ENCODE measurements at regions of chr22 and their contacts with region 1.

Region 1: GRCh38 chr22:20205964-20206708 is 55.3 kb upstream of the CCDC188 start:
- DNase-seq: peak; percentile 35 to 75 (median 63)
- ATAC-seq: peak; percentile 91
- H3K4me3 ChIP-seq: peak overlapping the region; percentile 96
- H3K4me3 Mint-ChIP-seq: peak overlapping the region; percentile 85 to 98 (median 94)
- H3K27ac ChIP-seq: peak overlapping the region; percentile 83
- H3K27ac Mint-ChIP-seq: peak overlapping the region; percentile 91 to 97 (median 94)
- H3K4me1 ChIP-seq: peaks cover 16 to 24% of the 10 kb centered on the region in 2 donors
- H3K4me1 Mint-ChIP-seq: peaks cover 12 to 36% (median 25%) of the 10 kb centered on the region in 7 donors
- H3K27me3 ChIP-seq: no peaks in the 10 kb centered on the region
- H3K27me3 Mint-ChIP-seq: no peaks in the 10 kb centered on the region

Region 2: GRCh38 chr22:19455585-19456370 is 750.4 kb before region 1 on chr22:
- CTCF ChIA-PET with region 1: no interaction called
- POLR2A ChIA-PET with region 1: no interaction called
- intact Hi-C with region 1: no loop called
- DNase-seq: no peak
- ATAC-seq: no peak
- H3K4me3 ChIP-seq: no peak overlapping the region
- H3K4me3 Mint-ChIP-seq: no peak overlapping the region
- H3K27ac ChIP-seq: no peak overlapping the region
- H3K27ac Mint-ChIP-seq: peak overlapping the region in 5 of 9 donors; percentile 30 to 76 (median 54)
- H3K4me1 ChIP-seq: no peaks in the 10 kb centered on the region
- H3K4me1 Mint-ChIP-seq: peaks cover 0 to 1% (median 0%) of the 10 kb centered on the region in 7 donors
- H3K27me3 ChIP-seq: no peaks in the 10 kb centered on the region
- H3K27me3 Mint-ChIP-seq: no peaks in the 10 kb centered on the region

Region 3: DNA sequence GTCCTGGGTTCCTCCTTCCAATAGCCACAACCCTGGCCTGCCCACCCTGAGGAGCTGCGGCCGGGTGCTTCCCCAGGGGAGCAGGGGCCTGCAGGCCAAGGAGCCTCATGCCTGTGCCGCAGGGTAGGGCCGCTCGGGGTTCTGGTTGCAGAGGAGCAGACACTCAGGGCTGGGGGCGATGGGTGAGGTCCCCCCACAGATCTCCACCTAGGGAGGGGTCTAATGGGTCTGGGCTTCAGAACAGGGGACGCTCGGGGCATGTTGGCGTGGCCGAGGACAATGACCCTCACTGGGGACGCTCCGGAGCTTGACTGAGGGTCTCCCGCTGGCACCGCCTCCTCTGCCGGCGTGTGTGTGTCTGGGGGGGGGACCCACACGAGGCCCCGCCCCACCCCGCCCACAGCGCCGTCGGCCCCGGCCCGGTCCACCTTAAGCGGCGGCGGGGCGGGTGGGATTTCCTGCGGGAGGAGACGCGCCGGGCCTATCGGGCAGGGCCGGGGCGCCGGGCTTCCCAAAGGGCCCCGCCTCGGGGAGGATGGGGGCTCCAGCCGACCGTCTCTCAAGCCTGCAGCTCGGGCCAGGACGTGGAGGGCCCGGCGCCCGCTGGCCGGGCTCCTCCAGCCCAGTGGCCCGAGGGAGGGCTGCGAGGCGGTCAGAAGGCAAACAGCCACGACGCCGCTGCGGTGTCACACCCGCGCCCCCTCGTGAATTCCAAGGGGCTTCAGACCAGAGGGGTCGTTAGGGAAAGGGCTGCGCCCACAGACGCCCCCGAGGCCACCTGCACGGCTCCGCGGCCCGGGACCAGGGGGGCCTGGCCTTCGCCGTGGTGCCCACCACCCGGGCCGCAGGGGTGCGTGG is 75.2 kb before region 1 on chr22:
- CTCF ChIA-PET with region 1: no interaction called
- POLR2A ChIA-PET with region 1: interaction called, 3 read pairs
- intact Hi-C with region 1: loop called in 1 of 2 experiments (anchors 1 kb)
- DNase-seq: peak; percentile 65 to 77 (median 72)
- ATAC-seq: peak; percentile 88
- H3K4me3 ChIP-seq: peak overlapping the region; percentile 73
- H3K4me3 Mint-ChIP-seq: peak overlapping the region in 8 of 10 donors; percentile 17 to 75 (median 69)
- H3K27ac ChIP-seq: peak overlapping the region; percentile 91
- H3K27ac Mint-ChIP-seq: peak overlapping the region in 6 of 9 donors; percentile 36 to 82 (median 68)
- H3K4me1 ChIP-seq: peaks cover 14 to 20% of the 10 kb centered on the region in 2 donors
- H3K4me1 Mint-ChIP-seq: peaks cover 0 to 33% (median 23%) of the 10 kb centered on the region in 7 donors
- H3K27me3 ChIP-seq: no peaks in the 10 kb centered on the region
- H3K27me3 Mint-ChIP-seq: no peaks in the 10 kb centered on the region

Region 4: DNA sequence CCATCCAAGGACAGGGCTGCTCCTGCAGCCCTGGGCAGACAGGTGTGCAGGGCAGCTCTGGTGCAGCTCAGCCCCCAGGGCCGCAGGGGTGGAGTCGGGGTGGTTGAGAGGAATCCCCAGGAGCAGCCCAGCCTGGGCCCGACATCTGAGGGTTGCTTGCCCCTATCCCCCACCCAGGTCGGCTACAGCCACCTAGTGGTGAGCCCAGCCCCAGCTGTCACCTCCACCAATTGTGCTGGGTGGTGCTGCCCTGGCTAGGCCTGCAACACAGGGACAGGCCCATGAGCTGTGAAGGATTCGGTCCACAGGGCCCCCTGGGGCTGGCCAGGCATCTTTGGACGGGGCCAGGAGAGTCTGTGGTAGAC is 32.4 kb after region 1 on chr22:
- CTCF ChIA-PET with region 1: no interaction called
- POLR2A ChIA-PET with region 1: interaction called, 30 read pairs
- intact Hi-C with region 1: loop called (anchors 1 kb)
- DNase-seq: peak in 7 of 9 donors; percentile 28 to 50 (median 38)
- ATAC-seq: peak; percentile 64
- H3K4me3 ChIP-seq: no peak overlapping the region
- H3K4me3 Mint-ChIP-seq: peak overlapping the region in 8 of 10 donors; percentile 29 to 54 (median 40)
- H3K27ac ChIP-seq: peak overlapping the region; percentile 49
- H3K27ac Mint-ChIP-seq: peak overlapping the region; percentile 36 to 87 (median 79)
- H3K4me1 ChIP-seq: peaks cover 31 to 59% of the 10 kb centered on the region in 2 donors
- H3K4me1 Mint-ChIP-seq: peaks cover 8 to 47% (median 14%) of the 10 kb centered on the region in 7 donors
- H3K27me3 ChIP-seq: no peaks in the 10 kb centered on the region
- H3K27me3 Mint-ChIP-seq: no peaks in the 10 kb centered on the region

Region 5: GRCh38 chr22:20243537-20244249 is 37.6 kb after region 1 on chr22:
- CTCF ChIA-PET with region 1: no interaction called
- POLR2A ChIA-PET with region 1: interaction called, 30 read pairs
- intact Hi-C with region 1: loop called (anchors 1 kb)
- DNase-seq: peak in 8 of 9 donors; percentile 44 to 67 (median 56)
- ATAC-seq: peak; percentile 64
- H3K4me3 ChIP-seq: peak overlapping the region; percentile 51
- H3K4me3 Mint-ChIP-seq: peak overlapping the region; percentile 71 to 88 (median 77)
- H3K27ac ChIP-seq: peak overlapping the region; percentile 78
- H3K27ac Mint-ChIP-seq: peak overlapping the region; percentile 88 to 98 (median 94)
- H3K4me1 ChIP-seq: peaks cover 50 to 74% of the 10 kb centered on the region in 2 donors
- H3K4me1 Mint-ChIP-seq: peaks cover 29 to 57% (median 35%) of the 10 kb centered on the region in 7 donors
- H3K27me3 ChIP-seq: no peaks in the 10 kb centered on the region
- H3K27me3 Mint-ChIP-seq: no peaks in the 10 kb centered on the region

Region 6: GRCh38 chr22:20268279-20269012 is 62.3 kb after region 1 on chr22 and contains the start of gene RTN4R:
- CTCF ChIA-PET with region 1: no interaction called
- POLR2A ChIA-PET with region 1: no interaction called
- intact Hi-C with region 1: loop called in 1 of 2 experiments (anchors 1 kb)
- DNase-seq: peak in 7 of 9 donors; percentile 41 to 73 (median 52)
- ATAC-seq: peak; percentile 84
- H3K4me3 ChIP-seq: no peak within 1 kb of the TSS
- H3K4me3 Mint-ChIP-seq: peak within 1 kb of the TSS; percentile 47 to 79 (median 74)
- H3K27ac ChIP-seq: peak within 1 kb of the TSS; percentile 8
- H3K27ac Mint-ChIP-seq: peak within 1 kb of the TSS in 1 of 9 donors; percentile 69
- H3K4me1 ChIP-seq: peaks cover 0 to 4% of the 10 kb centered on the region in 2 donors
- H3K4me1 Mint-ChIP-seq: peaks cover 0 to 7% (median 5%) of the 10 kb centered on the region in 7 donors
- H3K27me3 ChIP-seq: no peaks in the 10 kb centered on the region
- H3K27me3 Mint-ChIP-seq: peaks cover 0 to 6% (median 0%) of the 10 kb centered on the region in 5 donors
- total RNA-seq, gene RTN4R: 0.98 to 2.7 (median 1.8) TPM

Region 7: DNA sequence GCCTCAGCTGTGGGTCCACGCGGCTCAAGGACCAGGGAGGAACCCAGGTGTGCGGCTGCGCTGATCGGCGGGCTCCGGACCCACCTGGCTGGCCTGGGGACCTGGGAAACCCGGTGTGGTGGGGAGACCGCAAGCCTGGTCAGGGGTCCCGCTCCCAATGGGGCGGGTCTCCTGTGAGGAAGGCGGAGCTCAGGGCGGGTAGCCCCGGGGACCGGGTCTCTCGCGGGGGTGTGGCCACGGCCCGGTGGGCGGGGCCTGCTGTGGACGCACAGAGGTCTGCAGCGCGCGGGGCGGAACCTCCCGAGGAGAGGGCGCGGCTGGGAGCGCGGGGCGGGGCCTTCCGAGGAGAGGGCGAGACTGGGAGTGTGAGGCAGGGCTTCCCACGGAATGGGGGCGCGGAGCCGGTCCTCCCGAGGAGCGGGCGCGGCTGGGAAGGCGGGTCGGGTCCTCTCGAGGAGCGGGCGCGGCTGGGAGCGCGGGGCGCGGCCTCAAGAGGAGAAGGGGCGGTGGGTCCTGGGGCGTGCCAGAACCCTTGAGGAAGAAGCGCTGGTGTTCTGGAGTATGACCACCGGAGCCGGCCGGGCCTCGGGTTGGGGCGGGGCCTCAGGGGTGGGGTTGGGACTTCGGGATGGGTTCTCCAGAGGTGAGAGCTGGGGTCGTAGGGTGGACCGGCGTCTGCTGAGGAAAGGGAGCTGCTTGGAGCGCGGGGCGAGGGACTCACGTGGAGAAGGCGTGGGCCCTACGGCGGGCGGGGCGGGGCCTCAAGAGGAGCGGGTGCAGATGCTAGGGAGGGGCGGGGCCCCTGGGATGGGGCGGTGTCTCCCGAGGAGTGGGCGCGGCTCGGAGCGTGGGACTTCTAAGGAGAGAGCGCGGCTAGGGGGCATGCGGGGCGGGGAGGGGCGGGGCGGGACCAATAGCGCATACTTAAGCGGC is 92.9 kb after region 1 on chr22:
- CTCF ChIA-PET with region 1: no interaction called
- POLR2A ChIA-PET with region 1: no interaction called
- intact Hi-C with region 1: loop called in 1 of 2 experiments (anchors 1 kb)
- DNase-seq: peak; percentile 80 to 93 (median 92)
- ATAC-seq: peak; percentile 96
- H3K4me3 ChIP-seq: peak overlapping the region; percentile 52
- H3K4me3 Mint-ChIP-seq: peak overlapping the region; percentile 72 to 89 (median 82)
- H3K27ac ChIP-seq: peak overlapping the region; percentile 60
- H3K27ac Mint-ChIP-seq: peak overlapping the region in 6 of 9 donors; percentile 36 to 79 (median 62)
- H3K4me1 ChIP-seq: peaks cover 0 to 3% of the 10 kb centered on the region in 2 donors
- H3K4me1 Mint-ChIP-seq: peaks cover 4 to 11% (median 9%) of the 10 kb centered on the region in 7 donors
- H3K27me3 ChIP-seq: no peaks in the 10 kb centered on the region
- H3K27me3 Mint-ChIP-seq: peaks cover 0 to 27% (median 4%) of the 10 kb centered on the region in 5 donors

Region 8: GRCh38 chr22:20319745-20320658 is 113.9 kb after region 1 on chr22 and contains the start of gene DGCR6L:
- CTCF ChIA-PET with region 1: no interaction called
- POLR2A ChIA-PET with region 1: no interaction called
- intact Hi-C with region 1: loop called in 1 of 2 experiments (anchors 1 kb)
- DNase-seq: peak; percentile 92 to 98 (median 95)
- ATAC-seq: peak; percentile 96
- H3K4me3 ChIP-seq: peak within 1 kb of the TSS; percentile 91
- H3K4me3 Mint-ChIP-seq: peak within 1 kb of the TSS; percentile 83 to 98 (median 92)
- H3K27ac ChIP-seq: peak within 1 kb of the TSS; percentile 89
- H3K27ac Mint-ChIP-seq: peak within 1 kb of the TSS; percentile 76 to 95 (median 89)
- H3K4me1 ChIP-seq: peaks cover 20 to 53% of the 10 kb centered on the region in 2 donors
- H3K4me1 Mint-ChIP-seq: peaks cover 28 to 70% (median 58%) of the 10 kb centered on the region in 7 donors
- H3K27me3 ChIP-seq: no peaks in the 10 kb centered on the region
- H3K27me3 Mint-ChIP-seq: no peaks in the 10 kb centered on the region
- total RNA-seq, gene DGCR6L: 29.4 to 55.3 (median 43.7) TPM

Region 9: DNA sequence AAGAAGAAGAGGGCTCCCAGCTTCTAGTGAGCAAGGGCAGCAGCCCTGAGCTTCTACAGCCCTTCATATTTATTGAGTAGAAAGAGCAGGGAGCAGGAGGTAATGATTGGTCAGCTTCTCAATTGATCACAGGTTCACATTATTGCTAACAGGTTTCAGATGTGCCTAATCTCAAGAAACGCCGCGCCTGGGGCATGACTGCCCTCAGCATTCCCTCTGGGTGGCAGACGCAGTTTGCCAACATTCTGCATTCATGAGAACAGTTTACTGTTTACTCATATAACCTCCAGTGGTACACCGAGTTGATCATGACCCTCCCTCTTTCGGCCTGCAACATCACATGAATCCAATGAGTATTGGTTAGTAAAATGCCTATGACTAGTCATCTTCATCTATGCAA is 183.2 kb after region 1 on chr22:
- CTCF ChIA-PET with region 1: no interaction called
- POLR2A ChIA-PET with region 1: no interaction called
- intact Hi-C with region 1: no loop called
- DNase-seq: no peak
- ATAC-seq: no peak
- H3K4me3 ChIP-seq: no peak overlapping the region
- H3K4me3 Mint-ChIP-seq: no peak overlapping the region
- H3K27ac ChIP-seq: no peak overlapping the region
- H3K27ac Mint-ChIP-seq: peak overlapping the region in 1 of 9 donors; percentile 49
- H3K4me1 ChIP-seq: peaks cover 6 to 7% of the 10 kb centered on the region in 2 donors
- H3K4me1 Mint-ChIP-seq: peaks cover 0 to 9% (median 4%) of the 10 kb centered on the region in 7 donors
- H3K27me3 ChIP-seq: no peaks in the 10 kb centered on the region
- H3K27me3 Mint-ChIP-seq: peaks cover 0 to 26% (median 0%) of the 10 kb centered on the region in 5 donors